Spleen (tissue), 13 donors: ENCODE measurements at regions of chr1 and their contacts with region 1.

Region 1: DNA sequence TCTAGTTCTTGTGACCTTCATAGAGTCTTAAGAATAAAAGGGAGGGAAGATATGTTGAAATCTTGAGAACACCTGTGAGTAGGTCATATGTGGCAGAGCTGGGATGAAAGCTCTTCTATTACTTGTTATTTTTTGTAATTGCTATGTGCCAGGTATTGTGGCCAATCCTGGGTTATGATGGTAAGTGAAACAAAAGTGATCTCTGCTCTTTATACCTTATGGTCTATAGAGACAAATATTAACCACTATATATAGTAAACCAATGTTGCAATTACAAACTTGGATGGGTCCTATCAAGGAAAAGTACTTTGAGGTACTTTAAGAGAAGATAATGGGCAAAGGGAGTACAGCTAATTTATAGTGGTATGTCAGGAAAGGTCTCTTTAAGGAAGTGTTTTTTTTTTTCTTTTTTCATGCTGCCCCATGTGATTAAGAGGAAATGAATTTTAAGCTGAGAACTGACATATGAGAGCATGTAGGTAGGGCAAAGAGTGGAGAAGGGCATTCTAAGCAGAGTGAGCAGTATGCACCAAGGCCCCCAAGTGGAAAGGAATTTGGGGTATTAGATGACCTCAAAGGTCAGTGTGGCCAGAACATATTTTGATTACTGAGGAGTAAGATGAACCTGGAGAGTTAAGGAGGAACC is 43.3 kb downstream of the POU2F1 start:
- DNase-seq: no peak
- H3K4me3 ChIP-seq: no peak overlapping the region
- H3K27ac ChIP-seq: peak overlapping the region in 4 of 8 donors; percentile 31 to 42 (median 35)
- H3K4me1 ChIP-seq: peaks cover 11 to 87% (median 58%) of the 10 kb centered on the region in 6 donors
- H3K27me3 ChIP-seq: no peaks in the 10 kb centered on the region
- CTCF ChIP-seq: no peak
- POLR2A ChIP-seq: no peak

Region 2: GRCh38 chr1:167076136-167076710 is 187.7 kb before region 1 on chr1:
- intact Hi-C with region 1: loop called (anchors 10 kb)
- DNase-seq: no peak
- H3K4me3 ChIP-seq: no peak overlapping the region
- H3K27ac ChIP-seq: peak overlapping the region in 1 of 8 donors; percentile 27
- H3K4me1 ChIP-seq: peaks cover 0 to 15% (median 0%) of the 10 kb centered on the region in 6 donors
- H3K27me3 ChIP-seq: peaks cover 0 to 2% (median 0%) of the 10 kb centered on the region in 7 donors
- CTCF ChIP-seq: no peak
- POLR2A ChIP-seq: no peak

Region 3: GRCh38 chr1:167442124-167442848 is 178.3 kb after region 1 on chr1:
- intact Hi-C with region 1: loop called (anchors 10 kb)
- DNase-seq: peak; percentile 96
- H3K4me3 ChIP-seq: no peak overlapping the region
- H3K27ac ChIP-seq: peak overlapping the region in 3 of 8 donors; percentile 0 to 57 (median 28)
- H3K4me1 ChIP-seq: peaks cover 11 to 72% (median 36%) of the 10 kb centered on the region in 6 donors
- H3K27me3 ChIP-seq: peaks cover 0 to 20% (median 2%) of the 10 kb centered on the region in 7 donors
- CTCF ChIP-seq: peak; percentile 78 to 95 (median 88)
- POLR2A ChIP-seq: no peak

Region 4: DNA sequence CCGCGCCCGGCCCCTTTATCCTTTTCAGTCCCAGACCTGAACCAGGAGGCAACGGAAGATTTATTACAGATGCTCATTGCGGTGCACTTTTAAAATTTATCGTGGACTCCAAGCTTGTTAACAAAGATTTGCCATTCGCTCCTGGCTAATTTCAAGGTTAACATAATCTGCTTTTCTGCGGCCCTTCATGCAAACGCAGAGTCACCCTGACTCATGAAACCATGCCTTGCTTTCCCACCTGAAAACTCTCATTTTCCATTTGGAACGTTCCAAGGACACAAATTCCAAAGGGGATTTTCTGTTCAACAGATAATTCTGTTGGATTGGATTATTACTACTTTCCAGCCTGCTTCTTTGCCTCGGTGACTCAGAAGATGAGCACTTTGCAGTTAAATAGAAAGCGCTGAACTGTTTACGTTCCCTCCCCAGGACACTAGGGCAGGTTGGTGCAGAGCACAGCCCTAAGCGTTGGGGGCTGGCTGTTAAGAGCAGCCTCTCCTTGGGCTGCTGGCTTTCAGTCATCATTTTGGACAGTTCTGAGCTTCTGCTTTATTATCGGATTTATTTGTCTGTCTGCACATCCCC is 203.3 kb after region 1 on chr1:
- intact Hi-C with region 1: no loop called
- DNase-seq: no peak
- H3K4me3 ChIP-seq: no peak overlapping the region
- H3K27ac ChIP-seq: peak overlapping the region in 1 of 8 donors; percentile 14
- H3K4me1 ChIP-seq: peaks cover 0 to 41% (median 6%) of the 10 kb centered on the region in 6 donors
- H3K27me3 ChIP-seq: no peaks in the 10 kb centered on the region
- CTCF ChIP-seq: no peak
- POLR2A ChIP-seq: no peak